ENCODE measurements at regions of chr18 and their contacts with region 1.

Region 1: GRCh38 chr18:35580701-35581539 is 620 bp upstream of the GALNT1 start:
- DNase-seq: no peak
- H3K4me3 ChIP-seq: peak overlapping the region; percentile 65 to 98 (median 86)
- H3K27ac ChIP-seq: peak overlapping the region; percentile 91 to 99 (median 98)
- H3K4me1 ChIP-seq: peaks cover 18 to 34% (median 29%) of the 10 kb centered on the region in 4 donors
- H3K27me3 ChIP-seq: no peaks in the 10 kb centered on the region
- CTCF ChIP-seq: no peak
- EP300 ChIP-seq: no peak
- POLR2A ChIP-seq: no peak

Region 2: DNA sequence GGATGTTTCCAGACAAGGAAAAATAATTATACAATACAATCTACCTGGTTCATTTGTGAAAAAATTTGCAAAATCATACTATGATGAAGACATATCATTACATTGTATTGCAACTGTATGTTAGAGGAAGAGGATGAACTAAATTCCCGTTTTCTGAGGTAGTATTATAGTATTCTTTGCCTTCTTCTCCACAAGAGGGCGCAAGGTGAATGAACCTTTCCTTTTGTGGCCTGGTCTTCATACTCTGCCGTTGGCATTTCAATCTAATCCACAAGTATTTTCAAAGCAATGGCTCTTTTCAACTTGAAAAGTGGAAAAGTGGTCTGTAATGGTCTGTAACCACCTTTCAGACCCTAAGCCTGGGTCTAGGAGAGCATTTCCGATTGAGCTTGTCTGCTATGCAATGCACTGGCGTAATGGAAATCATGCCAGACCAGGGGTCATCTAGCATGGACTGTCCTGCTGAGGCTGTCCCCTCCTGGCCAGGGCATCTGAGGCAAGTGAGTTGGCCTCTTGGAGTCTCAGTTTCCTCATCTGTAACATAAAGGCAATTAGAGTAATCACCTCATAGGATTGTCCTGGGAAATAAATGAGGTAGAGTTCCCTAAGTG is 172.9 kb before region 1 on chr18:
- intact Hi-C with region 1: loop called (anchors 5 kb)
- DNase-seq: no peak
- H3K4me3 ChIP-seq: no peak overlapping the region
- H3K27ac ChIP-seq: no peak overlapping the region
- H3K4me1 ChIP-seq: peaks cover 0 to 13% (median 7%) of the 10 kb centered on the region in 4 donors
- H3K27me3 ChIP-seq: no peaks in the 10 kb centered on the region
- CTCF ChIP-seq: peak; percentile 60 to 74 (median 71)
- EP300 ChIP-seq: no peak
- POLR2A ChIP-seq: no peak

Region 3: DNA sequence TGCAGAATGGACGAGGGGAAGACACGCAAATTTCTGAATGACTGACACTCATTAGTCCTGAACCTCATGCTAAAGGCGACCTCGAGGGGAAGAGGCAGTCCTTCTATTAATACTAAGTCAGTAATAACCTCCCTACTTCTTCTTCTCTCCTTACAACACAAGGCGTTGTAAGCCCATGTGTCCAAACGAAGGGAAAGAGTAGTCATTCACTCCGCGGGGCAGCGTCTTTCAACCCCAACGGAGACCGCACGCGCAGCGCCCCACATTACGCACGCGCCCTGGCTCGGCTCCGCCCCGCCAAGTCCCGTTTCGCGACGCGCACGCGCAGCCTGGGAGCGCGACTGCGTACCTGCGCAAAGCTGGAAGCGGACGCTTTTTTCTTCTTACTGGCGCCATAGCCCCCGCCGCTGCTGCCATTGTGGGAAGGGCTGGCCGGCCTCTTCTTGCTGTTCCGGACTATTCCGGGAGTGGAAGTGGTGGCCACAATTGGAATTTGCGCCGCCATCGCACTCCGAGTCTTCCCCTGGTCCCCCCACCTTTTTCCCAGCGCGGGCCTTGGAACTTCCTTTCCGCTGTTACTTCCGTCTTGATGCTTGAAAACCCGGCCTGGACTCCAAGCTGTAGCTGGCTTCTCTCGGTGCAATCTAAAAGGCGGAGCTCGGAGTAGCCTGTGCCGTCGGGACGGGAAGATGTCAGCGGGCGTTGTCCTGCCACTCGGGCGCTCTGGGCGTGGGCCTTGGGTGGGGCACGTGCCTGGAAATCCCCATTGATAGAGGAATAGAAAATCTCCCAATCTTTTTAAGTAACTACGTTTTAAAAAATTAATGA is 83.3 kb before region 1 on chr18 and contains the start of gene INO80C:
- intact Hi-C with region 1: loop called (anchors 5 kb)
- DNase-seq: peak; percentile 97
- H3K4me3 ChIP-seq: peak within 1 kb of the TSS; percentile 68 to 79 (median 72)
- H3K27ac ChIP-seq: peak within 1 kb of the TSS; percentile 93 to 96 (median 93)
- H3K4me1 ChIP-seq: peaks cover 15 to 46% (median 37%) of the 10 kb centered on the region in 4 donors
- H3K27me3 ChIP-seq: no peaks in the 10 kb centered on the region
- CTCF ChIP-seq: no peak
- EP300 ChIP-seq: no peak
- POLR2A ChIP-seq: peak; percentile 71
- total RNA-seq, gene INO80C: 4.0 to 19.5 (median 8.8) TPM

Region 4: GRCh38 chr18:35616664-35617423 is 35.9 kb after region 1 on chr18:
- intact Hi-C with region 1: no loop called
- DNase-seq: no peak
- H3K4me3 ChIP-seq: no peak overlapping the region
- H3K27ac ChIP-seq: peak overlapping the region in 2 of 4 donors; percentile 32 to 36
- H3K4me1 ChIP-seq: peaks cover 35 to 59% (median 44%) of the 10 kb centered on the region in 4 donors
- H3K27me3 ChIP-seq: no peaks in the 10 kb centered on the region
- CTCF ChIP-seq: no peak
- EP300 ChIP-seq: no peak
- POLR2A ChIP-seq: no peak